ENCODE measurements at regions of chr6 and their contacts with region 1.

Region 1: GRCh38 chr6:46410334-46410953 is 80.8 kb downstream of the RCAN2 start:
- DNase-seq: no peak
- ATAC-seq: peak; percentile 80 to 92 (median 84)
- H3K4me3 ChIP-seq: no peak overlapping the region
- H3K27ac ChIP-seq: no peak overlapping the region
- H3K4me1 ChIP-seq: no peaks in the 10 kb centered on the region
- H3K27me3 ChIP-seq: no peaks in the 10 kb centered on the region
- CTCF ChIP-seq: peak; percentile 62 to 92 (median 86)
- POLR2A ChIP-seq: no peak

Region 2: DNA sequence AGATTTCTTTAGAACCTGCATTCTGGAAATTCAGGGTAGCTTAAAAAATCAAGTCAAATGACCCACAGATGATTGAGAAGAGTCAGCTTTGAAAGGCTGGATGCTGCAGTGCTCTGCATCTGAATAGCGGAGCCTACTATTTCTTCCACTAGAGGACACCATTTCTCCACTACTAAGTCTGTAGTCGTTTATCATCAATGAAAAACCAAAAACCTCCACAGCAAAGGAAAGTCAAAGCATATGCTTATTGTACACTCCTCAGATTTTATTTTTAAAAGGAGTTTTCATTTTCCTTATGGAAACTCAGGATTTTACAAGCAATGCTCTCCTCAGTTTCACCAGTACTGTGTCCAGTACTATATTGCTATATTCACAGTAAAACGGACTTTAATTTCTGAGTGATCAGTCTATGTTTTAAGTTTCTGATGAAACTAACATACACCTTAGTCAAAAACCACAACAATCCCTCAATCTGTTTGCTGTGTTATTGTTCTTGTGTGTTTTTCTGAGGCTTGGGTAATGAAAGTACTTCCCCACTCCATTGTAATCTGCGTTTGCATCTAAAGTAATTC is 189.1 kb before region 1 on chr6:
- intact Hi-C with region 1: loop called in 1 of 2 experiments (anchors 5 kb)
- DNase-seq: no peak
- ATAC-seq: peak; percentile 88 to 94 (median 91)
- H3K4me3 ChIP-seq: no peak overlapping the region
- H3K27ac ChIP-seq: no peak overlapping the region
- H3K4me1 ChIP-seq: peaks cover 0 to 3% (median 0%) of the 10 kb centered on the region in 4 donors
- H3K27me3 ChIP-seq: no peaks in the 10 kb centered on the region
- CTCF ChIP-seq: peak; percentile 88 to 94 (median 89)
- POLR2A ChIP-seq: no peak